ENCODE measurements at regions of chr14 and their contacts with region 1.

Region 1: GRCh38 chr14:35341446-35342159 is 49.4 kb downstream of the PSMA6 start:
- DNase-seq: peak; percentile 93 to 98
- ATAC-seq: peak; percentile 78 to 81
- H3K4me3 ChIP-seq: peak overlapping the region; percentile 47 to 57 (median 50)
- H3K27ac ChIP-seq: peak overlapping the region; percentile 94 to 99 (median 96)
- H3K4me1 ChIP-seq: peaks cover 30 to 34% of the 10 kb centered on the region in 2 donors
- H3K27me3 ChIP-seq: no peaks in the 10 kb centered on the region
- CTCF ChIP-seq: no peak
- POLR2A ChIP-seq: peak; percentile 61 to 71

Region 2: DNA sequence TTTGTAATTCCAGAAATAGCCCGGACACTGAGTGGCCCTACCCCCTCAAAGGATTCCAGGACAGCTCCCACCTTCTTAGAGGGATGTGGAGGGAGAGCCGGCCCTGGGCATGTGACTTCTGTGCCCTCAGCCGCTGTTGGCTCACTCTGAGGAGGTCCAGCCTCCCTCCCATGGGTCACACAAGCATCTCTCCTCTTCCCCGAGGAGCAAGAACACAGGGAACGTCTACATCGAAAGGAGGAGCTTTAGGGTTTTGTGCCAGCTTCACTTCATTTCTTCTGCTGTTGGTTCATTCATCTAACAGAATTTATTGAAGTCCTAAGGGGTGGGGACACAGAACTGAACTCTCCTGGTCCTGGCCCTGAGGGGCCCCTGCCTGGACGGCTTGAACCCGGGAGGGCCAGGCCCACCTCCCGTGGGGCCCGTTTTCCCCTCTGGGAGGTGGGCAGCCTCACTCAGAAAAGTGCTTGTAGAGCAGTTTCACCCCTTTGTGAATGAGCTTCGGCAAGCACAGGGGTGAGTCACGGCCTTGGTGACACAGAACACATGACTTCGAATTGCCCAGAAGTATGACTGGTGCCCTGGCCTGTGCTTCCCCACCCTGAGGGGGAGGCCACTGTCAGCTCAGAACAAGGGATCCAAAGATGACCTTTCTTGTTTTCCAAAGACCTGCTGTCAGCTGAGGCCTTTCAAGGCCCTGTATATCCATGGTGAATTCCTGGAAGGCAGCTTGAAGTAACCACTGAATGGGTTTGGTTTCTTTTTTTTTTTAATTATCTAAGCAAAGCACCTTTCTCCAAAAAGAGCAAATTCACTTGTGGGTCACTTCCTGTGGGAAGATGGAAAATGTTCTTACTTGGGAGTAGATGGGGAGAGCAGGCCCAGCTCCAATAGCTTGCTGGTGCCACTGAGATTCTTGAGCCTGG is 23.8 kb after region 1 on chr14:
- in situ Hi-C with region 1: no loop called
- intact Hi-C with region 1: no loop called
- DNase-seq: peak; percentile 51 to 80
- ATAC-seq: peak; percentile 80 to 83
- H3K4me3 ChIP-seq: no peak overlapping the region
- H3K27ac ChIP-seq: peak overlapping the region; percentile 63 to 77 (median 66)
- H3K4me1 ChIP-seq: peaks cover 17 to 28% of the 10 kb centered on the region in 2 donors
- H3K27me3 ChIP-seq: no peaks in the 10 kb centered on the region
- CTCF ChIP-seq: no peak
- POLR2A ChIP-seq: peak in 1 of 2 donors; percentile 54

Region 3: DNA sequence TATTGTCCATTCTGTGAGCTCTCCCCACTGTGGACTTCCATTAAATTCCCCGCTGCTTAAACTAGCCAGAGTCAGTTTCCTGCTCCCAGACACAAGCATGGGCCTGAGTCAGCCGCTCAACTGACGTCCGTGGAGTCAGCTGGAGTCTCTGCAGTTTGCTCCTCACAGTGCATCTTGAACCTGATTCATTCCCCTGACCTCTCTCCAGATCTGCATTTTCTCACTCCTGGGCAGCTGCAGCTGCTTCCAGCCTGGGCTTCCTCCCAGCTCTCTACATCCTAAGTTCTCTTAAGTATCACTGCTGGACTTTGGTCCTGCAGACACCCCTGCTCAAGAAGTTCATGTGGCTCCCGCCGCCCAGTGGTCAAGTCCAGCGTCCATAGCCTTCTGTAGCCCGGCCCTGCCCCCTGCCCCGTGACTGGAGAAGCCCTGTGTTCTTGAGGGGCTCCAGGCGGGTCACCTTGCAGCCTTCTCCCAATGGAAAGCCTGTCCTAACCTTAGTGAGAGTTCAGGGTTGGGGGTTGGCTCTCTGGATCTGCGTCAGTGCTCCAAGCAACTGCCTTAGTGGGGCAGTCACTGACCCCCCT is 42.9 kb after region 1 on chr14:
- in situ Hi-C with region 1: no loop called
- intact Hi-C with region 1: loop called (anchors 1 kb)
- DNase-seq: peak; percentile 77 to 92
- ATAC-seq: peak; percentile 75 to 84
- H3K4me3 ChIP-seq: peak overlapping the region; percentile 8 to 14 (median 11)
- H3K27ac ChIP-seq: peak overlapping the region; percentile 86 to 93 (median 90)
- H3K4me1 ChIP-seq: peaks cover 37 to 50% of the 10 kb centered on the region in 2 donors
- H3K27me3 ChIP-seq: no peaks in the 10 kb centered on the region
- CTCF ChIP-seq: peak in 4 of 5 experiments; percentile 50 to 59 (median 54)
- POLR2A ChIP-seq: peak; percentile 39 to 67

Region 4: DNA sequence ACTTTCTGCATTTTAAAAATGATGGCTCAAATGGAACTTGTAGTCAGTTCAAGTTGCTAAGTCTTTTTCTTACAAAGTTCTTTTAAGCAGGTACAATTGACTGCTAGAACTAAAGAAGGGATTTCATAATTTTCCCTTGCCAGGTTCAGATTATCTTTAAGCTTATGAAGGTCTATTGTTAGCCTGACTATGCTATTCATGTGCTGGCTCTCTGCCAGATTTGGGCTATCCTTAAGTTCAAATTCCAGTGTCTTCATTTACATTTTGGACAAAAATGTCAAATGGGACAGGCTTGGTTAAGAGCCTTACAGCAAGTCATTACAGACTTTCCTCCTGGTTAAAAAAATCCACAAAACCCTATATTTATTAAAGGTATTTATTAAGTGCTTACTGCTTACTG is 234.7 kb after region 1 on chr14:
- in situ Hi-C with region 1: no loop called
- intact Hi-C with region 1: no loop called
- DNase-seq: no peak
- ATAC-seq: no peak
- H3K4me3 ChIP-seq: no peak overlapping the region
- H3K27ac ChIP-seq: no peak overlapping the region
- H3K4me1 ChIP-seq: peaks cover 0 to 8% of the 10 kb centered on the region in 2 donors
- H3K27me3 ChIP-seq: no peaks in the 10 kb centered on the region
- CTCF ChIP-seq: no peak
- POLR2A ChIP-seq: no peak

Measured in gastrocnemius medialis (tissue), 4 donors.